Naive thymus-derived CD4-positive, alpha-beta T cell (primary cell): ENCODE measurements at regions of chr17 and their contacts with region 1.

Region 1: GRCh38 chr17:56819431-56820145 is 14.1 kb downstream of the C17orf67 start:
- DNase-seq: peak; percentile 38 to 78 (median 68)
- ATAC-seq: peak; percentile 90
- H3K4me3 ChIP-seq: no peak overlapping the region
- H3K4me3 Mint-ChIP-seq: no peak overlapping the region
- H3K27ac ChIP-seq: no peak overlapping the region
- H3K27ac Mint-ChIP-seq: peak overlapping the region in 2 of 9 donors; percentile 48 to 76
- H3K4me1 ChIP-seq: no peaks in the 10 kb centered on the region
- H3K4me1 Mint-ChIP-seq: peaks cover 5 to 9% (median 8%) of the 10 kb centered on the region in 7 donors
- H3K27me3 ChIP-seq: no peaks in the 10 kb centered on the region
- H3K27me3 Mint-ChIP-seq: no peaks in the 10 kb centered on the region

Region 2: GRCh38 chr17:56257082-56257481 is 562.5 kb before region 1 on chr17:
- CTCF ChIA-PET with region 1: no interaction called
- POLR2A ChIA-PET with region 1: no interaction called
- intact Hi-C with region 1: no loop called
- DNase-seq: no peak
- ATAC-seq: no peak
- H3K4me3 ChIP-seq: no peak overlapping the region
- H3K4me3 Mint-ChIP-seq: no peak overlapping the region
- H3K27ac ChIP-seq: no peak overlapping the region
- H3K27ac Mint-ChIP-seq: no peak overlapping the region
- H3K4me1 ChIP-seq: no peaks in the 10 kb centered on the region
- H3K4me1 Mint-ChIP-seq: no peaks in the 10 kb centered on the region
- H3K27me3 ChIP-seq: no peaks in the 10 kb centered on the region
- H3K27me3 Mint-ChIP-seq: peaks cover 0 to 6% (median 3%) of the 10 kb centered on the region in 5 donors

Region 3: GRCh38 chr17:56866496-56866895 is 46.9 kb after region 1 on chr17:
- CTCF ChIA-PET with region 1: interaction called, 7 read pairs
- POLR2A ChIA-PET with region 1: interaction called, 3 read pairs
- intact Hi-C with region 1: loop called (anchors 1 kb)
- DNase-seq: peak in 1 of 9 donors; percentile 6
- ATAC-seq: no peak
- H3K4me3 ChIP-seq: no peak overlapping the region
- H3K4me3 Mint-ChIP-seq: no peak overlapping the region
- H3K27ac ChIP-seq: no peak overlapping the region
- H3K27ac Mint-ChIP-seq: peak overlapping the region in 1 of 9 donors; percentile 57
- H3K4me1 ChIP-seq: no peaks in the 10 kb centered on the region
- H3K4me1 Mint-ChIP-seq: peaks cover 0 to 6% (median 0%) of the 10 kb centered on the region in 7 donors
- H3K27me3 ChIP-seq: no peaks in the 10 kb centered on the region
- H3K27me3 Mint-ChIP-seq: no peaks in the 10 kb centered on the region

Region 4: DNA sequence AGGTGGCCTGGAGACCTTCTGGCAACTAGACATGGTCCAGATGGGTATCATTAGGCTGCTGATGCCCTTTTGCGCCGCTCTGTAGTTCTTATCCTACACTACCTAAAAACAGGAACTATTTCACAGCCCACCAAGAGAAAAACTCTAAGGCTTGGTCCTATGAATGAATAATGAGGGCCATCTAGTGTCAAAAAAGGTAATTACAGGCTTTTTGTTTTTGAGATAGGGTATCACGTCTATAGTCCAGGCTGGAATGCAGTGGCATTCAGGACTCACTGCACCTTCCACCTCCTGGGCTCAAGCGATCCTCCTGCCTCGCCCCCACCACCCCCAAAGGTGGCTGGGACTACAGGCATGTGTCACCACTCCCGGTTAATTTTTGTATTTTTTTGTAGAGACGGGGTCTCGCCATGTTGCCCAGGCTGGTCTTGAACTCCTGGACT is 120.3 kb after region 1 on chr17:
- CTCF ChIA-PET with region 1: interaction called, 54 read pairs
- POLR2A ChIA-PET with region 1: interaction called, 4 read pairs
- intact Hi-C with region 1: loop called (anchors 1 kb)
- DNase-seq: peak in 7 of 9 donors; percentile 27 to 64 (median 52)
- ATAC-seq: peak; percentile 80
- H3K4me3 ChIP-seq: no peak overlapping the region
- H3K4me3 Mint-ChIP-seq: no peak overlapping the region
- H3K27ac ChIP-seq: no peak overlapping the region
- H3K27ac Mint-ChIP-seq: peak overlapping the region in 5 of 9 donors; percentile 4 to 85 (median 65)
- H3K4me1 ChIP-seq: no peaks in the 10 kb centered on the region
- H3K4me1 Mint-ChIP-seq: peaks cover 0 to 19% (median 0%) of the 10 kb centered on the region in 7 donors
- H3K27me3 ChIP-seq: no peaks in the 10 kb centered on the region
- H3K27me3 Mint-ChIP-seq: no peaks in the 10 kb centered on the region

Region 5: DNA sequence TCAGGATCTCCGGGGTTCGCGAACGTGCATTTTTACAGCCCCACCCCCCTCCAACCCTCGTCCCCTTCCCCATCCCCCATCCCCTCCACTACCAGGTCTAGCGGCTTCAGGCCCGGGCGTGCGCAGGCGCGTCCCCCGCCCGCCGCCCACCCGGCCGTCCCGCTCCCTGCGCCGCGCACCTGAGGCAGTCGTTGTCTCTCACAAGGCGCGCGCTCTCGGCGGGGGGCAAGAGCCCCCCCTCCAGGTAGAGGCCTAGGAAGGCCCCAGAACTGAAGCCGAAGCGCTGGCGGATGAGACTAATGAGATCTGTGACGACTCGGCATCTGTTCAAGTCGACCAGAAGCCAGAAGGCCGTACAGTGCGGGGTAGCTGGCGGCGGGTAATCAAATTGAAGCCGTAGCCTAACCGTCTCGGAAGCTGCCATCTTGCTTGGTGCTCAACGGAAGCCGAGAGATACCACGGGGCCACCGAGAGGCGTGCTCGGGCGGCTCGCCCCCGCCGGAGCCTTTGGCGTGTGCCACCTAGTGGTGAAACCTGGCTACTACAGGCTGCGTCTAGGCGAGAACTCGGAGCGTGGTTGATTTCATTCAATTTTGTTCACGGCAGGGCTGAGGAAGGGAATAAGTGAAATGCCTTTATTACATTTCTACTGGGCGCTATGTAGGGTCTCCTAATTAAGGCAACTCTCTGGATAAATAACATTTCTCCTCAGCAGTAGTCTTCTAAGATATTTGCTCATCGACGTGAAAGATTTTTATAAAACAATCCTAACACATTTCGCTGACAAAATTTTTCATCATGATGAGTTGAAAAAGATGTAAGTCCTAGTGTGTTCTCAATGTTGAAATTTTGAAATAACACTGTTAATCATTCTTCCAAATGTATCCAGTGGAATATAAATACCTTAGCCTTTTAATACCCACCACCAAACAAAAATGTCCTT is 141.3 kb after region 1 on chr17 and contains the start of gene COIL:
- CTCF ChIA-PET with region 1: interaction called, 3 read pairs
- POLR2A ChIA-PET with region 1: no interaction called
- intact Hi-C with region 1: loop called (anchors 1 kb)
- DNase-seq: peak; percentile 90 to 96 (median 92)
- ATAC-seq: peak; percentile 100
- H3K4me3 ChIP-seq: peak within 1 kb of the TSS; percentile 80
- H3K4me3 Mint-ChIP-seq: peak within 1 kb of the TSS; percentile 80 to 93 (median 86)
- H3K27ac ChIP-seq: peak within 1 kb of the TSS; percentile 97
- H3K27ac Mint-ChIP-seq: peak within 1 kb of the TSS; percentile 78 to 95 (median 91)
- H3K4me1 ChIP-seq: peaks cover 6 to 11% of the 10 kb centered on the region in 2 donors
- H3K4me1 Mint-ChIP-seq: peaks cover 14 to 34% (median 28%) of the 10 kb centered on the region in 7 donors
- H3K27me3 ChIP-seq: no peaks in the 10 kb centered on the region
- H3K27me3 Mint-ChIP-seq: peaks cover 0 to 3% (median 0%) of the 10 kb centered on the region in 5 donors
- total RNA-seq, gene COIL: 13.1 to 22.7 (median 19.0) TPM

Region 6: GRCh38 chr17:56994009-56994792 is 174.6 kb after region 1 on chr17:
- CTCF ChIA-PET with region 1: no interaction called
- POLR2A ChIA-PET with region 1: no interaction called
- intact Hi-C with region 1: no loop called
- DNase-seq: no peak
- ATAC-seq: no peak
- H3K4me3 ChIP-seq: no peak overlapping the region
- H3K4me3 Mint-ChIP-seq: no peak overlapping the region
- H3K27ac ChIP-seq: no peak overlapping the region
- H3K27ac Mint-ChIP-seq: no peak overlapping the region
- H3K4me1 ChIP-seq: no peaks in the 10 kb centered on the region
- H3K4me1 Mint-ChIP-seq: no peaks in the 10 kb centered on the region
- H3K27me3 ChIP-seq: no peaks in the 10 kb centered on the region
- H3K27me3 Mint-ChIP-seq: no peaks in the 10 kb centered on the region

Region 7: DNA sequence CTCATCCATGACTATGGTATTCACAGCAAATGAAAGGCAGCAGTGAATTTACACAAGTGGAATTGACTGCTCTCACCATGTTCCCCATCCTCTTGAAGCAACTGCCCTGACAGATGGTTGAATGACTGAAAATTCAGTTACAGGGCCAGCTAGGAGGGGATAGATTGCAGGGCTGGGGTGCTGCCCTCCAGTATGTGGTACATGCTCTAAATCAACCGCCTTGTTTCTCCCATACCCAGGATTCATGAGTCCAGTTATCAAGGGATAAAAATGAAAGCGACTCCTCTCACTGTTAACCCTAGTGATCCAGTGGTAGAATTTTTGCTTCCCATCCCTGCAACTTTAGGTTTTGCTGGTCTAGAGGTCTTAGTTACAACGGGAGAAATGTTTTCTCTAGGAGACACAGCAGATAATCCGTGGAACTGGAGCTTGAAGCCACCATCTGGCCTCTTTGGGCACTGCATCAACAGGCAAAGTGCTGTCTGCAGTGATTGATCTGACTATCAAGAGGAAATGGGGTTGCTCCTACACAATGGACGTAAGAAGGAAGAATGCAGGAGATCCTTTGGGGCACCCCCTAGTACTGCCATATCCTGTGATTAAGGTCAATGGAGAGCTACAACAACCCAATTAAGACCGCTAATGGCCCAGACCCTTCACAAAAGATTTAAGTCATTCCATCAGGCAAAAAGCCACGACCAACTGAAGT is 190.3 kb after region 1 on chr17:
- CTCF ChIA-PET with region 1: no interaction called
- POLR2A ChIA-PET with region 1: no interaction called
- intact Hi-C with region 1: loop called in 1 of 2 experiments (anchors 1 kb)
- DNase-seq: peak; percentile 10 to 54 (median 41)
- ATAC-seq: peak; percentile 91
- H3K4me3 ChIP-seq: no peak overlapping the region
- H3K4me3 Mint-ChIP-seq: peak overlapping the region in 9 of 10 donors; percentile 13 to 84 (median 66)
- H3K27ac ChIP-seq: no peak overlapping the region
- H3K27ac Mint-ChIP-seq: peak overlapping the region in 3 of 9 donors; percentile 1 to 57 (median 10)
- H3K4me1 ChIP-seq: no peaks in the 10 kb centered on the region
- H3K4me1 Mint-ChIP-seq: peaks cover 6 to 15% (median 10%) of the 10 kb centered on the region in 7 donors
- H3K27me3 ChIP-seq: no peaks in the 10 kb centered on the region
- H3K27me3 Mint-ChIP-seq: peaks cover 0 to 17% (median 0%) of the 10 kb centered on the region in 5 donors